AG04449 (cell line): ENCODE measurements at regions of chr7 and their contacts with region 1.

Region 1: DNA sequence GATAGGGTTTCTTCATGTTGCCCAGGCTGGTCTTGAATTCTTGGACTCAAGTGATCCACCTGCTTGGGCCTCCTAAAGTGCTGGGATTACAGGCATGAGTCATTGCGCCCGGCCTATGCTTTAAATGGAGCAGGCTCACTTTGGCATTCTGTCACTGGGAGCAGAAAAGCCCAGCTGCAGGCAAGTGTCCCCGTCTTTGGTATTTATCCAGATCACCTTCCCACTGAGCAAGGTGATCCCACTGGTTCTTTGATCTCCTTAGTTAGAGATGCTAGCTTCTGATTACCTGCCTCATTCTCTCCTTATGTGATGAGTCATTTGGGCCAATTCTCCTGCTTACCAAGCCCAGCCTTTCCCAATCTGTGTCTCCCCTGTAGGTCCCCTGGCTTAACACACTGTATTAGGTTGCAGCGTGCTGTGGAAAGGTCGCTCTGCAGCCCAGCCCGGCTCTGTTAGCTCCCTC is 39.3 kb downstream of the SPDYE5 start:
- DNase-seq: no peak
- H3K4me3 ChIP-seq: no peak overlapping the region
- CTCF ChIP-seq: no peak

Region 2: DNA sequence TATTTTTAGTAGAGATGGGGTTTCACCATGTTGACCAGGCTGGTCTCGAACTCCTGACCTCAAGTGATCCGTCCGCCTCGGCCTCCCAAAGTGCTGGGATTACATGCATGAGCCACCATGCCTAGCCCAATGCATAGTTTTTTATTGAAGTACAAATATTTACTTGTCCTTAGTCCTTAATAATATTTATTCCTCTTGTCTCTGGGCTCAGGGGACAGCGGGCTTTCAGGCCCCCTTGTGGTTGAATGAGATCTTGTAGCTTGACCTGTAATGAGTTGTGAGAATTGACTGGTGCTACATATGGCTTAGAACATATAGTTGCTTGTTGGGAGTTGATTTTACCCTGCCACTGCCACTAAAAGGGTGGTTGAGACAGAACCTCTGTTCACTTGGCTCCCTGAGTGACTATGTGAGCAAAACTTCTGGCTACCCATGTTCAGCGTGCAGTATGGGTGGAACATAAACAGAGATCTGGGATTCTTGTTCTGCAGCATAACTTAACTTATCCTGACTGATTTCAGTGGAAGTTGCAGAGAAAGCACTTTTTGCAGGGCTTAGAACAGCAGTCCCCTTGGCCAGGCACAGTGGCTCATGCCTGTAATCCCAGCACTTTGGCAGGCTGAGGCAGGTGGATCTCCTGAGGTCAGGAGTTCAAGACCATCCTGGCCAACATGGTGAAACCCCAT is 225.7 kb after region 1 on chr7:
- CTCF ChIA-PET with region 1: interaction called, 11 read pairs
- POLR2A ChIA-PET with region 1: interaction called, 5 read pairs
- DNase-seq: no peak
- H3K4me3 ChIP-seq: no peak overlapping the region
- CTCF ChIP-seq: peak; percentile 50

Region 3: DNA sequence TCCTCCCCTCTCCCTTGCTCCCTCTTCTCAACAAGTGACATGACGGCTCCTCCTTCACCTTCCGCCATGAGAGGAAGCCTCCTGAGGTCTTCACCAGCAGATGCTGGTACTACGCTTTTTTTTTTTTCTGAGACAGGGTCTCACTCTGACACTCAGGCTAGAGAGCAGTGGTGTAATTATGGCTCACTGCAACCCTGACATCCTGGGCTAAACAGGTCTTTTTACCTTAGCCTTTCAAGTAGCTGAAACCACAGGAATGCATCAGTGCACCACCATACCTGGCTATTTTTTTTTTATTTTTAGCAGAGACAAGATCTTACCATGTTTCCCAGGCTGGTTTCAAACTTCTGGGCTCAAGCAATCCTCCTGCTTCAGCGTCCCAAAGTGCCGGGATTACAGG is 560.1 kb after region 1 on chr7:
- CTCF ChIA-PET with region 1: no interaction called
- POLR2A ChIA-PET with region 1: no interaction called
- DNase-seq: no peak
- H3K4me3 ChIP-seq: no peak overlapping the region
- CTCF ChIP-seq: no peak